Thyroid gland (tissue), 4 donors: ENCODE measurements at regions of chr7 and their contacts with region 1.

Region 1: GRCh38 chr7:22488643-22489462 is 11.1 kb downstream of the STEAP1B start:
- DNase-seq: peak; percentile 70 to 71
- H3K4me3 ChIP-seq: no peak overlapping the region
- H3K27ac ChIP-seq: no peak overlapping the region
- H3K4me1 ChIP-seq: no peaks in the 10 kb centered on the region
- H3K27me3 ChIP-seq: no peaks in the 10 kb centered on the region
- CTCF ChIP-seq: peak; percentile 64 to 89 (median 82)
- POLR2A ChIP-seq: no peak

Region 2: GRCh38 chr7:22074897-22075296 is 414.0 kb before region 1 on chr7:
- intact Hi-C with region 1: no loop called
- DNase-seq: no peak
- H3K4me3 ChIP-seq: no peak overlapping the region
- H3K27ac ChIP-seq: no peak overlapping the region
- H3K4me1 ChIP-seq: no peaks in the 10 kb centered on the region
- H3K27me3 ChIP-seq: no peaks in the 10 kb centered on the region
- CTCF ChIP-seq: no peak
- POLR2A ChIP-seq: no peak

Region 3: DNA sequence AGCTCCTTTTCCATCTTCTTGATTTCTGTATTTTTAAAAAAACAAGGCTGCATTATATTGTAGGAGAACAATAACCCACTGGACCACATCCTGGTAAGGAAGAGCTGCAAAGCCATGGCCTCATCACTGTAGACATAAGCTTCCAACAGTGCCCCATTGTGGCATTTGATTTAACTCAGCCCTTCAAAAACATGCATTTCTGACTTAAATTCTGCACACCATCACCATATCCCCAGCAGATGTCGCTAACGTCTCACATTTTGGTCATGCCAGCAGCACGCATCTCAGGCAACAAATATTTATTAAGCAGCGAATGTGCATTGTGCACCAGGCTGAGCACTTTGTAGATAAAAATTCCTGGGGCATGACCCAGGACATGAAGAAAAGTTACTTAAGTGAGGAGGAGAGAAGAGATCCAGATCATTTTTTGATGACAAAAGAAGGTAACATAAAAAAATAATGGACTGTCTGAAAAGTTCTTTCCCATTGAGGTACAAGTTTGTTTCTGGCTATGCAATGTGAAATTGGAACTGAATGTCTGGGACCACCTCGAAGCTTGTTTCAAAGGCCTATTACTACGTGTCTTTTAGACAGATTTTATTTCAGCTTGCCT is 378.5 kb before region 1 on chr7:
- intact Hi-C with region 1: loop called (anchors 2 kb)
- DNase-seq: peak; percentile 75 to 76
- H3K4me3 ChIP-seq: no peak overlapping the region
- H3K27ac ChIP-seq: no peak overlapping the region
- H3K4me1 ChIP-seq: no peaks in the 10 kb centered on the region
- H3K27me3 ChIP-seq: no peaks in the 10 kb centered on the region
- CTCF ChIP-seq: peak; percentile 62 to 98 (median 81)
- POLR2A ChIP-seq: no peak